PC-3 (cell line): ENCODE measurements at regions of chr3 and their contacts with region 1.

Region 1: DNA sequence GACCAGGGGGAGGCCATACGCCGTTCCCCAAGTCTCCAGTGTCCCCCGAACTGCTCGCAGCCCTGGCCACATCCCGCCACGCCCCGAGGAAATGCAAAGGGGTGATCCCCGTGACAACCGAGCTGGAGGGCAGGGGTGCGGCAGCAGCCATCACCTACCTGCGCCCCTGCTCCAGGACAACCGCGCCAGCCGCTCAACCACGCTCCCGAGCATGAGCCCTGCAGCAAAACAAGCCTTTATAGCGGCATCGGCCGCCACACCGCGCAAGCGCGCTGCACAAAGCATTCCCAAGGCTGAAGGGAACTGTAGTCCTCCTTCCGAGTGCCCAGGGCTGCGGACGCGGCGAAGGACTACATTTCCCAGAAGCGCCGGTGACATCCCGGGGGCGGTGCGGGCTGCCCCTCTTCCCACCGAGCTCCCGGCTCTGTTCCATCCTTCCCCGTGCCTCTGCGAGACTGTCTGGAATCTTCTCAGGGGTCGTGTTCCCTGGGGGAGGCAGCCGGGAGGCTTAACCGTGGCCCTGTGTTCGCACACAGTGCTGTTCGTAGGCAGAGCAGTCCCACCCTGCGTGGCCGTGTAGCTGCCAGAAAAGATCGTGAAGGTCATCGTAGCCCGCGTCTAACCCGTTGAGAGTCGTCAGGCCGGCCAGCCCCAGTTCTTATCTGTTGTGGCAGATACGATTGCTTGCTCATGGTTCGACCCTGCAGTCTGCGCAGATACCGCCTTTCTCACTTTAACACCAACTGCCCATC is at the start of gene ABCC5:
- DNase-seq: peak; percentile 93
- ATAC-seq: peak; percentile 97
- H3K4me3 ChIP-seq: peak within 1 kb of the TSS; percentile 98
- H3K27ac ChIP-seq: peak within 1 kb of the TSS; percentile 26; the same call in 1 of the 2 replicates
- H3K4me1 ChIP-seq: peaks cover 29% of the 10 kb centered on the region
- H3K27me3 ChIP-seq: no peaks in the 10 kb centered on the region
- CTCF ChIP-seq: peak; percentile 41; the same call in 1 of the 2 replicates
- total RNA-seq, gene ABCC5: 16.1 and 24.9 TPM in 2 replicates

Region 2: GRCh38 chr3:183895296-183895695 is 122.6 kb before region 1 on chr3:
- CTCF ChIA-PET with region 1: interaction called, 8 read pairs
- POLR2A ChIA-PET with region 1: interaction called, 5 read pairs
- intact Hi-C with region 1: loop called (anchors 1 kb)
- DNase-seq: peak; percentile 71
- ATAC-seq: peak; percentile 67
- H3K4me3 ChIP-seq: no peak overlapping the region
- H3K27ac ChIP-seq: no peak overlapping the region
- H3K4me1 ChIP-seq: no peaks in the 10 kb centered on the region
- H3K27me3 ChIP-seq: no peaks in the 10 kb centered on the region
- CTCF ChIP-seq: peak; percentile 88

Region 3: DNA sequence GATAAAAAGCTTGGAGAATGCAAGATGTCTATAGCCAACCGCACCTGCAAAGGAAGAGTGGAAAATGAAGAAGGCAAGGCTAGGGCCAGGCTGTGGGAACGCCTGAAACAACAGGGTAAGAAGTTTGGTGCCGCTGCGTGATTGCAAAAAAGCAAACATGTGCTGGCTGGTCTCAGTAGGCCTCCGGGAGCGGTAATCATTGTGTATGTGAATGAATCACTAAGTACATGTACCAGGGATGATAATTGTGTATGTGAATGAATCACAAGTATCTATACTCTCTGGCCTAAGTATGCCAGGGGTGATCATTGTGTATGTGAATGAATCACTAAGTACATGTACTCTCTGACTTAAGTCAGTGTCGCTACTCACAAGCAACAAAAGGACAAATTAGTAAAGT is 92.9 kb before region 1 on chr3:
- CTCF ChIA-PET with region 1: no interaction called
- POLR2A ChIA-PET with region 1: no interaction called
- intact Hi-C with region 1: loop called (anchors 1 kb)
- DNase-seq: peak; percentile 97
- ATAC-seq: peak; percentile 98
- H3K4me3 ChIP-seq: no peak overlapping the region; the same call in 1 of the 2 replicates
- H3K27ac ChIP-seq: peak overlapping the region; percentile 97
- H3K4me1 ChIP-seq: peaks cover 24% of the 10 kb centered on the region
- H3K27me3 ChIP-seq: no peaks in the 10 kb centered on the region
- CTCF ChIP-seq: no peak

Region 4: GRCh38 chr3:184005941-184006507 is 11.8 kb before region 1 on chr3:
- CTCF ChIA-PET with region 1: interaction called, 10 read pairs
- POLR2A ChIA-PET with region 1: no interaction called
- intact Hi-C with region 1: loop called (anchors 1 kb)
- DNase-seq: peak; percentile 98
- ATAC-seq: peak; percentile 90
- H3K4me3 ChIP-seq: peak overlapping the region; percentile 42; the same call in 1 of the 2 replicates
- H3K27ac ChIP-seq: peak overlapping the region; percentile 89
- H3K4me1 ChIP-seq: peaks cover 49% of the 10 kb centered on the region
- H3K27me3 ChIP-seq: no peaks in the 10 kb centered on the region
- CTCF ChIP-seq: no peak

Region 5: GRCh38 chr3:184078851-184079250 is 61.0 kb after region 1 on chr3:
- CTCF ChIA-PET with region 1: no interaction called
- POLR2A ChIA-PET with region 1: no interaction called
- intact Hi-C with region 1: no loop called
- DNase-seq: no peak
- ATAC-seq: no peak
- H3K4me3 ChIP-seq: no peak overlapping the region
- H3K27ac ChIP-seq: no peak overlapping the region
- H3K4me1 ChIP-seq: no peaks in the 10 kb centered on the region
- H3K27me3 ChIP-seq: no peaks in the 10 kb centered on the region
- CTCF ChIP-seq: no peak